ENCODE measurements at regions of chr1 and their contacts with region 1.

Region 1: GRCh38 chr1:150259758-150260669 is 2.4 kb downstream of the CA14 start:
- DNase-seq: no peak
- ATAC-seq: no peak
- H3K4me3 ChIP-seq: no peak overlapping the region
- H3K4me3 Mint-ChIP-seq: no peak overlapping the region
- H3K27ac ChIP-seq: no peak overlapping the region
- H3K27ac Mint-ChIP-seq: no peak overlapping the region
- H3K4me1 ChIP-seq: peaks cover 11% of the 10 kb centered on the region
- H3K4me1 Mint-ChIP-seq: peaks cover 12% of the 10 kb centered on the region
- H3K27me3 ChIP-seq: peaks cover 6 to 16% of the 10 kb centered on the region in 2 experiments
- H3K27me3 Mint-ChIP-seq: peaks cover 29% of the 10 kb centered on the region
- CTCF ChIP-seq: no peak

Region 2: DNA sequence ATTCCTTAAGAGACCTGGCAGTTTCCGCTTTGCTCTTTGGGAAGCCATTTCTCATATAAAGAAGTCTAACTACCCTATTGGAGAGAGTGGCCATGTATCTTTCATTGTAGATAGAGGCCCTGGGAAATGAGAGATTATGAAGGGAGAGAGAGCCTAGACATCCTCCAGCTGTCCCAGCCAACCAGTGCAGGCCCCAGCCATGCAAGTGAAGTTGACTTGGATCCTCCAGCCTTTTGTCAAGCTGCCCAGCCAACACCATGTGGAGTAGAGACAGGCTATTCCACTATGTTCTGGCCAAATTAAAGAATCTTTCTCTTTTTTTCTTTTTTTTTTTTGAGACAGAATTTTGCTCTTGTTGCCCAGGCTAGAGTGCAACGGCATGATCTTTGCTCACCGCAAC is 17.0 kb before region 1 on chr1:
- CTCF ChIA-PET with region 1: interaction called, 7 read pairs
- POLR2A ChIA-PET with region 1: no interaction called
- intact Hi-C with region 1: loop called in 1 of 2 experiments (anchors 2 kb)
- DNase-seq: peak in 1 of 9 experiments; percentile 2
- ATAC-seq: no peak
- H3K4me3 ChIP-seq: no peak overlapping the region
- H3K4me3 Mint-ChIP-seq: no peak overlapping the region
- H3K27ac ChIP-seq: no peak overlapping the region
- H3K27ac Mint-ChIP-seq: no peak overlapping the region
- H3K4me1 ChIP-seq: no peaks in the 10 kb centered on the region
- H3K4me1 Mint-ChIP-seq: no peaks in the 10 kb centered on the region
- H3K27me3 ChIP-seq: peaks cover 0 to 2% of the 10 kb centered on the region in 2 experiments
- H3K27me3 Mint-ChIP-seq: no peaks in the 10 kb centered on the region
- CTCF ChIP-seq: no peak

Region 3: DNA sequence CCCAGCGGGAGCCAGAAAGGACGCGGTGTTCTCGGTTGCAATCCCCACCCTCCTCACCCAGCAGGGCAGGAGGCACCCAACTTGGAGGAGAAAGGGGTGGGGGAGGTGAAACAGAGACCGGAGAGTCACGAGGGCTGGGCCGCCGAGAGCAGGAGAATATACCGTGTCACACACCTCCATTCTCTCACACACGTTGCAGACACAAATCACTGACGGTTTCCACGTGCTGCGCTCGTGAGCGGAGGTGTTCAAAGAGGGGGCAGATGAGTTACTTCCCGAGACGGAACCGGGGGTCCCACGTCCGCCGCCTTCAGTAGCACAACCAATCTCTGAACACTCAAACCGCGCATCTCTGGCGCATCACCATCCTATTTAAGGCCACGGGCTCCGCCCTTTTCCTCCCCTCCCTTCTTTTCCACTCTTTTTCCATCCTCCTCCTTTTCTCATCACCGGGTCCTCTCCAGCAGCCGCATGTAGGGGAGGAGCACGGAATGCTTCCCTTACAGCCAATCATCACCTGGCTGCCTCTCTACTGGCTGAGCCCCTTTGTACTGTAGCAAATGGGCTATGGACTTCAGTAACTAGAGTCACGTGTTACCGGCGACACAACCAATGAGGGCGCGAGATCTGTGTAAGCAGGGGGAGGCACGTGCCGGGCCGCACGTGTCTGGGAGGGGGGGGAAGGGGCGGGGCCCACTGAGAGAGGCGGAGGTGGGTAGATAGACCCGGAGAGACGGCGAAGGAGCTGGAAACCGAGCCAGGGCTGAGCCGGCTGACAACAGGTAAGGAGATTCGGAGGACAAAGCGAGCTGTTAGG is 22.0 kb after region 1 on chr1 and contains the start of gene CIART:
- CTCF ChIA-PET with region 1: interaction called, 21 read pairs
- POLR2A ChIA-PET with region 1: no interaction called
- intact Hi-C with region 1: loop called (anchors 1 kb)
- DNase-seq: peak; percentile 45 to 92 (median 74)
- ATAC-seq: peak; percentile 76
- H3K4me3 ChIP-seq: peak within 1 kb of the TSS; percentile 56 to 57
- H3K4me3 Mint-ChIP-seq: peak within 1 kb of the TSS; percentile 83
- H3K27ac ChIP-seq: peak within 1 kb of the TSS; percentile 17 to 44
- H3K27ac Mint-ChIP-seq: peak within 1 kb of the TSS; percentile 89
- H3K4me1 ChIP-seq: peaks cover 24% of the 10 kb centered on the region
- H3K4me1 Mint-ChIP-seq: peaks cover 21% of the 10 kb centered on the region
- H3K27me3 ChIP-seq: no peaks in the 10 kb centered on the region
- H3K27me3 Mint-ChIP-seq: no peaks in the 10 kb centered on the region
- CTCF ChIP-seq: no peak
- total RNA-seq, gene CIART: 2.0 to 2.3 TPM

Region 4: DNA sequence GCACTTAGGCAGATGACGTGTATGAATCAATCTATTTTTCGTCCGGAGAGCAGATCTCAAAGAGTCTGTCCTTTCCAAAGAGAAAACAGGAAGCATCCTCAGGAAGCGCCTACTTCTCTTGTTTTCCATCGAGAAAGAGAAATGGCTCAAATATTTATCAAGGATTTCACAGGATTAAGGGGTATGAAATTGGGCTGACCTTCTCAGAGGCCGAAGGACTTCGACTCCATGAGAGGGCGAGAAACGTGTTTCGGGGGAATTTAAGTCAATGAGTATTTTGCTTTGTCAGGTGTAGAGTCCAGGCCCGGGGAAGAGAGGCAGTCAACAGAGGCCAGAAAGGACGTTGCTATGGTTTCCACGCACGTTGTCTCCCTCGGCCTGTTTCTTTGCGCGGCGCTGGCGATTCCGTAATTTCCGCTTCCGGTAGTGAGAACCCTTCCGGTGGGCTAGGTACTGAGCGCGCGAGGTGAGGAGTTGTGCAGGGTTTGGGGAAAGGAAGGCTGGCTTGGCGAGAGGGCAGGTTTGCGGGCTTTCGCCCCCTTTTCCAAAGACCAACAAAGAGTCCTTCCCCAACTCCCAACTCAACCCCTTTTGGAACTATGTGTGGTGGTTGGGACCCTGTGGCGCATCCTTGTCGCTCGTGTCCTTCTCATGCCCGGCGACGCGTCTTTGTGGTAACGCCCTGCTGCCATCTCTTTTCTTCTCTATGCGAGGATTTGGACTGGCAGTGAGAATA is 33.6 kb after region 1 on chr1 and contains the start of gene MRPS21:
- CTCF ChIA-PET with region 1: interaction called, 5 read pairs
- POLR2A ChIA-PET with region 1: no interaction called
- intact Hi-C with region 1: loop called in 1 of 2 experiments (anchors 1 kb)
- DNase-seq: peak; percentile 75 to 96 (median 84)
- ATAC-seq: peak; percentile 94
- H3K4me3 ChIP-seq: peak within 1 kb of the TSS; percentile 72 to 79
- H3K4me3 Mint-ChIP-seq: peak within 1 kb of the TSS; percentile 91
- H3K27ac ChIP-seq: peak within 1 kb of the TSS; percentile 96 to 98
- H3K27ac Mint-ChIP-seq: peak within 1 kb of the TSS; percentile 94
- H3K4me1 ChIP-seq: peaks cover 15% of the 10 kb centered on the region
- H3K4me1 Mint-ChIP-seq: peaks cover 35% of the 10 kb centered on the region
- H3K27me3 ChIP-seq: no peaks in the 10 kb centered on the region
- H3K27me3 Mint-ChIP-seq: no peaks in the 10 kb centered on the region
- CTCF ChIP-seq: no peak
- total RNA-seq, gene MRPS21: 41.6 to 43.9 TPM

Region 5: DNA sequence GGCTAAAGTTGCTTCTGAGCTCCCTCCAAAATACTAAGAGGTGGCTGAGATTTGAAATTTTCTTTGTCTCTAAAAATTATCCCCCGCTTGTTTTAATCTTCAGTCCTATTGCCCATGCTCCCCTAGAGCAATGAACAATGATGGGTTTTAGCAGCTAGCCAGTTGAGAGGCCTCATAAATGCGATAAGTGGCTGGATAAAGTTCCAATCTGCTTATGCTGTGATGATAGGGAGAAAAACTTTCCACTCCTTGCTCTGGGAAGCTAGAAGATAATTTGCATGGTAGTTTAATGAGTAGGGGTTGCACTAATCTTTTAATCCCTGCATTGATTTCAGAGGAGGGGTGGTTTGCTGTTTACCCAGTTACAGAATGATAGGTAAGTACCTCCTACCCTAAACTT is 51.7 kb after region 1 on chr1:
- CTCF ChIA-PET with region 1: no interaction called
- POLR2A ChIA-PET with region 1: no interaction called
- intact Hi-C with region 1: no loop called
- DNase-seq: no peak
- ATAC-seq: no peak
- H3K4me3 ChIP-seq: no peak overlapping the region
- H3K4me3 Mint-ChIP-seq: no peak overlapping the region
- H3K27ac ChIP-seq: no peak overlapping the region
- H3K27ac Mint-ChIP-seq: no peak overlapping the region
- H3K4me1 ChIP-seq: no peaks in the 10 kb centered on the region
- H3K4me1 Mint-ChIP-seq: no peaks in the 10 kb centered on the region
- H3K27me3 ChIP-seq: no peaks in the 10 kb centered on the region
- H3K27me3 Mint-ChIP-seq: no peaks in the 10 kb centered on the region
- CTCF ChIP-seq: no peak

Region 6: DNA sequence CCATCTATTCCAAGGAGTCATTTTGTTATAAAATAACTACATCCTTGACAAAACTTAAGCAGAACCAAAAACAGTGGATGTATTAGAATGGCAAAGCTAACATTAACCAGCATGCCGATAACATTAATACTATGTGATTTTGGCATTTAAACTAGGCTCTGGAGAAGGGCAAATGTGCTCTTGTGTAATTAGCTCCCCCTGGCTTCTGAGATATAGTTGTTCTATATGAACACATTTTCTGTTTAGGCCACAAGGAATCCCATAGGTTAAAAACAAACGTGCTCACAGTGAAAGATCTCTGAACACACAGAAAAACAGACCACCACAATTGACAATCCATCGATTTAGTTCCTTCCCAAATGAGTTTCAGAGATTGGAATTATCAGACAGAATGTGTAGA is 169.8 kb after region 1 on chr1:
- CTCF ChIA-PET with region 1: no interaction called
- POLR2A ChIA-PET with region 1: no interaction called
- intact Hi-C with region 1: loop called (anchors 1 kb)
- DNase-seq: peak in 2 of 9 experiments; percentile 18 to 41
- ATAC-seq: no peak
- H3K4me3 ChIP-seq: no peak overlapping the region
- H3K4me3 Mint-ChIP-seq: no peak overlapping the region
- H3K27ac ChIP-seq: no peak overlapping the region
- H3K27ac Mint-ChIP-seq: peak overlapping the region; percentile 1
- H3K4me1 ChIP-seq: no peaks in the 10 kb centered on the region
- H3K4me1 Mint-ChIP-seq: peaks cover 22% of the 10 kb centered on the region
- H3K27me3 ChIP-seq: no peaks in the 10 kb centered on the region
- H3K27me3 Mint-ChIP-seq: no peaks in the 10 kb centered on the region
- CTCF ChIP-seq: no peak

Region 7: GRCh38 chr1:150515328-150516048 is 255.5 kb after region 1 on chr1 and contains the start of gene FALEC:
- CTCF ChIA-PET with region 1: interaction called, 3 read pairs
- POLR2A ChIA-PET with region 1: no interaction called
- intact Hi-C with region 1: loop called in 1 of 2 experiments (anchors 10 kb)
- DNase-seq: peak; percentile 76 to 95 (median 89)
- ATAC-seq: peak; percentile 98
- H3K4me3 ChIP-seq: peak within 1 kb of the TSS; percentile 68 to 89
- H3K4me3 Mint-ChIP-seq: peak within 1 kb of the TSS; percentile 89
- H3K27ac ChIP-seq: peak within 1 kb of the TSS; percentile 13 to 63
- H3K27ac Mint-ChIP-seq: peak within 1 kb of the TSS; percentile 79
- H3K4me1 ChIP-seq: peaks cover 3% of the 10 kb centered on the region
- H3K4me1 Mint-ChIP-seq: peaks cover 16% of the 10 kb centered on the region
- H3K27me3 ChIP-seq: no peaks in the 10 kb centered on the region
- H3K27me3 Mint-ChIP-seq: no peaks in the 10 kb centered on the region
- CTCF ChIP-seq: no peak
- total RNA-seq, gene FALEC: not detected